Heart left ventricle (tissue), 16 donors: ENCODE measurements at regions of chr14 and their contacts with region 1.

Region 1: GRCh38 chr14:66624299-66624937 is 116.5 kb downstream of the GPHN start:
- DNase-seq: peak; percentile 33 to 68 (median 44)
- ATAC-seq: peak; percentile 80 to 95 (median 91)
- H3K4me3 ChIP-seq: no peak overlapping the region
- H3K27ac ChIP-seq: peak overlapping the region in 1 of 12 donors; percentile 23
- H3K4me1 ChIP-seq: peaks cover 0 to 16% (median 6%) of the 10 kb centered on the region in 12 donors
- H3K27me3 ChIP-seq: no peaks in the 10 kb centered on the region
- CTCF ChIP-seq: peak; percentile 56 to 80 (median 68)
- POLR2A ChIP-seq: no peak

Region 2: DNA sequence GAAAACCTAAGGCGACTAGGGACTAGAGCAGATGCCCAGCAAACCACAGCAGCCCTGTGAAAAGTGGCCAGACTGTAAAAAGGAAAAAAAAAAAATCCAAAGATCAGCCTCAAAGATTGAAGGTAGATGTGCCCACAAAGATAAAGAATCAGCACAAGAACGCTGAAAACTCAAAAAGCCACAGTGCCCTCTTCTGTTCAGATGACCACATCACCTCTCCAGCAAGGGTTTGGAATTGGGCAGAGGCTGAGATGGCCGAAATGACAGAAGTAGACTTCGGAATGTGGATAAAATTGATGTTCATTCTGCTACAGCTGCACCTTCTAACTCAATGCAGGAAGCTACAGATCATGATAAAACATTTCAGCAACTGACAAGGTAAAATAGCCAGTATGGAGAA is 38.0 kb after region 1 on chr14:
- intact Hi-C with region 1: loop called in 4 of 10 experiments (anchors 5 kb)
- DNase-seq: no peak
- ATAC-seq: no peak
- H3K4me3 ChIP-seq: no peak overlapping the region
- H3K27ac ChIP-seq: no peak overlapping the region
- H3K4me1 ChIP-seq: no peaks in the 10 kb centered on the region
- H3K27me3 ChIP-seq: no peaks in the 10 kb centered on the region
- CTCF ChIP-seq: peak in 9 of 12 donors; percentile 20 to 53 (median 36)
- POLR2A ChIP-seq: no peak

Region 3: DNA sequence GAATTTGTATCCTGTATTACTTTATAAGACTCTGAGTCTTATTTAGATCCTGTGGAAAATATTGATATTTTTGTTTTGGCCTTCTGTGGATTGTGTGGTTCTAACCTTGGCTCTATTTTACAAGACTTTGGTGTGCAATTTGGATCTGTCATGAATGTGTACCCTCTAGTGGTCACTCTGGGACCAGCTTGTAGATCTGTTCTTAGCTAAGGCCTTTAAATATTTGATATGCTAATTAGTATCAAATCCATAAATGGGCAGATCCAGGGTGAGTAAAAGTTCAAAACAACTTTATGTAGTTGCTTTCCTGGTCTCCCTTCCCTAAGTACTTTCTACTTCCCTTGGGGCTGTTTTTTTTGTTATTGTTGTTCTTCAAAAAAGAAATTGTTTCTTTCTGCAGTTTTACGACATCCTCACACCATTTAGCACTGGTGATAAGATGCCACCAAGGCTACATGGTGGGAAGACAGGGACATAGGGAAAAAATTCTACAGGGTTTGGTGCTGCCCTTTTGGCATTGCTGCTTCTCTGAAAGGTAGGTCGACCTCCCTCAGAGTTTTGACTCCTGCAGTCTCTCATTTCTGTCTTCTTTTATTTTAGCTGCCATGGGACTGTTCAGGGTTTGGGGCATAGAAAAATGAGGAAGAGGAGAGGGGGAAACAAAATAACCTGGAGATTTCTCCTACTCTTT is 122.0 kb after region 1 on chr14:
- intact Hi-C with region 1: loop called in 4 of 10 experiments (anchors 5 to 10 kb)
- DNase-seq: no peak
- ATAC-seq: peak in 3 of 4 donors; percentile 41 to 74 (median 48)
- H3K4me3 ChIP-seq: no peak overlapping the region
- H3K27ac ChIP-seq: no peak overlapping the region
- H3K4me1 ChIP-seq: peaks cover 0 to 23% (median 3%) of the 10 kb centered on the region in 12 donors
- H3K27me3 ChIP-seq: no peaks in the 10 kb centered on the region
- CTCF ChIP-seq: peak; percentile 40 to 66 (median 52)
- POLR2A ChIP-seq: no peak

Region 4: DNA sequence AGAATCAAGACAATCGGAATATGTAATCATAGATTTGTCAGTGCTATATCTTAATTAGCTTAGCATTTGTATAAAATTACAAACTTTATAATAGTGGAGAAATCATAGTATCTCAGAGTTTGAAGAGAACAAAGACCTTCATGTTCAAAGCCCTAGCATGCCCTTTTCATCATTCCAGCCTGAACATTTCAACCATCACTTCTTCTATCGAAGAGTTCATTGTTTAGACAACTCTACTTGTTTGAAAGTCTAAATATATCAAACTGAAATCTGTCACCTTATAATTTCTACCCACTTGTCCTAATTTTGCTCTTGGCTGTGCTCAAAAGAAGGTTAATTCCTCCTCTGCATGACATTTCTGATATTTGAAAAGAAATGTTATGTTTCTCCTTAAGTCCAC is 209.4 kb after region 1 on chr14:
- intact Hi-C with region 1: no loop called
- DNase-seq: no peak
- ATAC-seq: no peak
- H3K4me3 ChIP-seq: no peak overlapping the region
- H3K27ac ChIP-seq: no peak overlapping the region
- H3K4me1 ChIP-seq: no peaks in the 10 kb centered on the region
- H3K27me3 ChIP-seq: no peaks in the 10 kb centered on the region
- CTCF ChIP-seq: no peak
- POLR2A ChIP-seq: no peak

Region 5: GRCh38 chr14:67111022-67111421 is 486.6 kb after region 1 on chr14:
- intact Hi-C with region 1: loop called in 3 of 10 experiments (anchors 5 to 10 kb)
- DNase-seq: no peak
- ATAC-seq: no peak
- H3K4me3 ChIP-seq: no peak overlapping the region
- H3K27ac ChIP-seq: no peak overlapping the region
- H3K4me1 ChIP-seq: no peaks in the 10 kb centered on the region
- H3K27me3 ChIP-seq: no peaks in the 10 kb centered on the region
- CTCF ChIP-seq: no peak
- POLR2A ChIP-seq: no peak